ENCODE measurements at regions of chr1 and their contacts with region 1.

Region 1: GRCh38 chr1:11838349-11839272 is 9.0 kb downstream of the NPPA start:
- DNase-seq: peak; percentile 68 to 90
- ATAC-seq: peak; percentile 89 to 95 (median 92)
- H3K4me3 ChIP-seq: no peak overlapping the region
- H3K27ac ChIP-seq: no peak overlapping the region
- H3K4me1 ChIP-seq: no peaks in the 10 kb centered on the region
- H3K27me3 ChIP-seq: no peaks in the 10 kb centered on the region
- CTCF ChIP-seq: peak; percentile 99

Region 2: GRCh38 chr1:11893907-11894251 is 55.3 kb after region 1 on chr1:
- intact Hi-C with region 1: loop called (anchors 1 kb)
- DNase-seq: peak; percentile 55 to 85
- ATAC-seq: peak; percentile 87 to 96 (median 90)
- H3K4me3 ChIP-seq: no peak overlapping the region
- H3K27ac ChIP-seq: no peak overlapping the region
- H3K4me1 ChIP-seq: no peaks in the 10 kb centered on the region
- H3K27me3 ChIP-seq: peaks cover 0 to 24% (median 6%) of the 10 kb centered on the region in 3 donors
- CTCF ChIP-seq: peak; percentile 88

Measured in psoas muscle (tissue), 8 donors.